ENCODE measurements at regions of chr1 and their contacts with region 1.

Region 1: DNA sequence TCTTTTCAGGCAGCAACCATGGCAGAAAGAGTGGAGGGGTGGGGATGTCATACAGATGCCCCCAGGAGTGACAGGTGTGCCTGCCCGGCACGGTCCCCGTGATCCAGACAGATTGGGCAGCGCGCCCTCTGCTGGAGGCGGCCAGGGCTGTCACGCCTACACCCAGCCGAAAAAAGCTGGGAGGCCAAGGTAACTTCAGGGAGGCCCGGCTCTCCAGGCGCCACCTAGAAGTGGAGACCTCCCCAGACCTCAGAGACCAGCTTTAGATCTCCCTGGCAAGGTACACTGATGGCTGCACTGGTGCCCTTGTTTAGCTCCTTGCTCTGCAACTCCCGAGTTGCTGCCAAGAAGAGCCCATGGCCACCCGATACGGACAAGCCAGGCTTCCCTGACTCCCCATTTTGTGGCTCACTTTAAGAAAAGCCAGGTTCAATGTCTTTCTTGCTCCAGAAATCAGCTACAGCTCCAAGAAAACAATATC is 6.6 kb downstream of the GOLT1A start:
- DNase-seq: peak; percentile 81
- H3K4me3 Mint-ChIP-seq: no peak overlapping the region
- H3K27ac Mint-ChIP-seq: no peak overlapping the region
- H3K4me1 Mint-ChIP-seq: peaks cover 5% of the 10 kb centered on the region
- H3K27me3 Mint-ChIP-seq: peaks cover 32% of the 10 kb centered on the region

Region 2: DNA sequence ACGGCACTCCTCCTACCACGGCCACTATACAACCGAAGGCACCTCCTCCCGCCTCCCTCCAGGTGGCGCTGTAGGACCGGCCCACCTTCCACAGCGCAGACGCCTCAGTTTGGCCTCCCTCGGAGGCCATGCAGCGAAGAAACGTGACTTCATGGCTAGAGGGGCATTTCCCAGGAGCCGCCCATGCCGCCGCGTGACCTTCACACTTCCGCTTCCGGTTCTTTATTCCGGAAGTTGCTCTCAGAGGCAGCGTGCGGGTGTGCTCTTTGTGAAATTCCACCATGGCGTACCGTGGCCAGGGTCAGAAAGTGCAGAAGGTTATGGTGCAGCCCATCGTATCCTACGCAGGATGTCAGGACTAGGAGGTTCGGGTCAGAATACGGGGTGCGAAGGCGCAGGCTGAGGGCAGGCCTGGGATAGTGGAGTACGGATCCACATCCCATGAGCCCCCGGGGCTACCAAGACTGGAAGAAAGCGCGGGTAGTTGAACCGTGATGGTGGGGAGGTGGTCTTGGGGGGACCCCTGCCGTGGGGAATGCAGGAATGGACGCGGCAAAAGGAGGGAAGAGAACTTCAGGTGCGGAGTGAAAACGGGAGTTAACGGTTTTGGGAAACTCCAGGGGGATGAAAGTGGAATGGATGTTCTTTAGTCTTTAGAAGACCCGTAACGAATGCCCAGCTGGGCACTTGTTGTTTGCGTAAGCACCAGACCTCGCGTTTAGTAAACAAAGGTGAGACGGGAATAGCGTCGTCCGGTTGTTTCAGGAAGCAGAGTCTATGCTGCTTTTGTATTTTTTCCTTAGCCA is 345.6 kb before region 1 on chr1 and contains the start of gene SNRPE:
- CTCF ChIA-PET with region 1: interaction called, 6 read pairs
- POLR2A ChIA-PET with region 1: no interaction called
- intact Hi-C with region 1: loop called (anchors 5 kb)
- DNase-seq: peak; percentile 98
- H3K4me3 Mint-ChIP-seq: peak within 1 kb of the TSS; percentile 93
- H3K27ac Mint-ChIP-seq: peak within 1 kb of the TSS; percentile 90
- H3K4me1 Mint-ChIP-seq: peaks cover 10% of the 10 kb centered on the region
- H3K27me3 Mint-ChIP-seq: no peaks in the 10 kb centered on the region
- total RNA-seq, gene SNRPE: 327 to 339 TPM

Region 3: DNA sequence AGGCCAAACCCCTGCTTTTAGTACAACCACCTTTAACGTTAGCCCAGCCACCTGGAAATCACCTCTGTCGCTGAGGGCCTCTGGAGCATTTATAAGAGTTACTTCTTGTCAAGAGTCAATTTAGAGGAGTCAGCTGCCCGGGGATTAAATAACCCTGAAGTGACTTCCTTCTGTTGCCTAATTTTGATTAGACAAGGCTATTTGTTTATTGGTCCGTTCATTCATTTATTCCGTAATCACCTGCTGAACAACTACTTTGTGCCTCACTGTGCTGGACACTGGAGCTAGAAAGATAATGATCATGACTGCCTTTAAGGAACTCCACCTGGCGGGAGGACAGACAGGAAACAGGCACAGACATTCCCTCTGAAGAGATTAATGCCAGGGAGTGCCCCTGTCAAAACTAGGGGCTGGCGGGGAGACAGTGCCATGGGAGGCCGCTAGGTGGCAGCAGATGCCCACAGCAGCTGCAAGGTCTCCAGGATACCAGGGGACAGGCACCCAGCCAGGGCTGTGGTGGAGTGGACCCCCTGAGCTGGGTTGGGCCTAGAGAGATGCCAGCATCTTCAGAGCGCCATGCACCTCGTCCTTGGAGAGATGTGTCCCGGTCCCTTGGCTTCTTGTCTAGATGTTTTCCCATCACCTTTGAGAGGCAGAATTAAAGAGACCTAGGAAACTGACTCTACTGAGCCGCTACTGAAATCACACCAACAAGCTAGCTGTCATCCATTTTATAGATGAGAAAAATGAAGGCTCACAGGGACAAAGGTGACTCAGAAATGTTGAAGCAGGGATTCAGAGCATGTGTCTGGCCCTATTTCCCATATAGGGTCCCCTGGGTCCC is 44.7 kb before region 1 on chr1:
- CTCF ChIA-PET with region 1: interaction called, 70 read pairs
- POLR2A ChIA-PET with region 1: no interaction called
- intact Hi-C with region 1: loop called (anchors 1 kb)
- DNase-seq: peak; percentile 86
- H3K4me3 Mint-ChIP-seq: no peak overlapping the region
- H3K27ac Mint-ChIP-seq: no peak overlapping the region
- H3K4me1 Mint-ChIP-seq: no peaks in the 10 kb centered on the region
- H3K27me3 Mint-ChIP-seq: peaks cover 6% of the 10 kb centered on the region

Region 4: GRCh38 chr1:204190212-204191211 is 16.7 kb before region 1 on chr1:
- CTCF ChIA-PET with region 1: interaction called, 45 read pairs
- POLR2A ChIA-PET with region 1: no interaction called
- intact Hi-C with region 1: no loop called
- DNase-seq: peak; percentile 36
- H3K4me3 Mint-ChIP-seq: no peak overlapping the region
- H3K27ac Mint-ChIP-seq: no peak overlapping the region
- H3K4me1 Mint-ChIP-seq: peaks cover 13% of the 10 kb centered on the region
- H3K27me3 Mint-ChIP-seq: peaks cover 44% of the 10 kb centered on the region

Region 5: DNA sequence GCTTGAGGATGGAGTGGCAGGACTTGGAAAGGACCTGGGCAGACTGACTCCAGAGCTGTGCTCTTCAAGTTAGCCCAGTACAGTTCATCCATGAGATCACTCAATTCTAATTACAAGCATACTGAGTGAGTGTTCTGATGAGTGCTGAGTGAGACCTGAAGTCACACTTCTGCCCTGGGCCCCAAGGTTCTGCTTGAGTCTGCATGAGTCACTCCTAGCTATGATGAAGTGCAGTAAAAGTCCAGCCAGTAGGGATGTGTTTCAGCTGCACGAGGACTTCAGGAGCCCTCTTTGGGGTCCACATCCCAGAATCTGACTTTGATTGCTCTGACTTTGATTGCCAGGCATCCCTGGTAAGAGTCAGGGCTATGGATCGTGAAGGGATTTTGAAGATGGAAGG is 116.7 kb after region 1 on chr1:
- CTCF ChIA-PET with region 1: interaction called, 10 read pairs
- POLR2A ChIA-PET with region 1: no interaction called
- intact Hi-C with region 1: no loop called
- DNase-seq: peak; percentile 84
- H3K4me3 Mint-ChIP-seq: no peak overlapping the region
- H3K27ac Mint-ChIP-seq: peak overlapping the region; percentile 68
- H3K4me1 Mint-ChIP-seq: peaks cover 30% of the 10 kb centered on the region
- H3K27me3 Mint-ChIP-seq: peaks cover 10% of the 10 kb centered on the region

Region 6: DNA sequence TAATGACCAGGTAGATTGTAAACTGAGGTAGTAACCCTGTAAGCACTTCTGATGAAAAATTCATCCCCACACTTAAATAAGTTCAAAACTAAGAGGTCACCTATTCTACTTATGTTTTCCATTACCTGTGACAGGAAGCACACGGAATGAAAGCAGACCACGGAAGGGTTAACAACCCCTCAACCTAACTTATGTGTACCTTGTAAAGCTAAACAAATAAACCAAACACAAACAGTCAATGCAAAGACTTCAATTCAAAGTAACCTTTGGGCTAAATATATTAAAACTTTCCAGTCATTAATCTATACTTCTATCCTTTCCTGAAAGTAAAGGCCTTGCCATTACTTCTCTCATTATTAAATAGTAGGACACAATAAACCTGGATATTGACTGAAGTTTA is 197.5 kb after region 1 on chr1:
- CTCF ChIA-PET with region 1: no interaction called
- POLR2A ChIA-PET with region 1: no interaction called
- intact Hi-C with region 1: no loop called
- DNase-seq: no peak
- H3K4me3 Mint-ChIP-seq: no peak overlapping the region
- H3K27ac Mint-ChIP-seq: peak overlapping the region; percentile 33
- H3K4me1 Mint-ChIP-seq: peaks cover 24% of the 10 kb centered on the region
- H3K27me3 Mint-ChIP-seq: no peaks in the 10 kb centered on the region

Region 7: DNA sequence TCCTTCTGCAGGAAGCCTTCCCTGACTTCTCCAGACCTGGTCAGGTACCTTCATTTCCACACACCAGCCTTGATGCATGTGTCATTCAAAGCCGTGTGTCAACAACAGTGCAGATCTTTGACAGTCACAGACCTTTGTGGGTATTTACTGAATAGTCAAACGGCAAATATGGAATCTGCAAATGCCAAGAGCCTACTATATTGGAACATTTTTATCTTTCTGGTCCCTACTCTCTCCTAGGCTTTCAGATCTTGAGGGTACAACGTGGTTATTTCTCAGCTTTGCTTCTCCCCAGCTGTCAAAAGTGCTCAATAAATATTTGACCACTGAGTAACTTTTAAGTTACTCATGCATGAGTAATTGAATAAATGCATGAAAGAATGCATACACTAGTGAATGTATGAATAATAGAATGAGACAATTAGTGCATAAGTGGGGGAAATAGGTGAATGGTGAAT is 384.4 kb after region 1 on chr1:
- CTCF ChIA-PET with region 1: no interaction called
- POLR2A ChIA-PET with region 1: no interaction called
- intact Hi-C with region 1: no loop called
- DNase-seq: no peak
- H3K4me3 Mint-ChIP-seq: no peak overlapping the region
- H3K27ac Mint-ChIP-seq: no peak overlapping the region
- H3K4me1 Mint-ChIP-seq: no peaks in the 10 kb centered on the region
- H3K27me3 Mint-ChIP-seq: no peaks in the 10 kb centered on the region